Psoas muscle (tissue), 8 donors: ENCODE measurements at regions of chr17 and their contacts with region 1.

Region 1: GRCh38 chr17:4908301-4908700 is 5.4 kb upstream of the CHRNE start:
- DNase-seq: peak in 1 of 2 donors; percentile 61
- ATAC-seq: peak in 3 of 4 donors; percentile 2 to 13 (median 9)
- H3K4me3 ChIP-seq: no peak overlapping the region
- H3K27ac ChIP-seq: peak overlapping the region; percentile 75
- H3K4me1 ChIP-seq: peaks cover 3% of the 10 kb centered on the region
- H3K27me3 ChIP-seq: no peaks in the 10 kb centered on the region
- CTCF ChIP-seq: no peak

Region 2: DNA sequence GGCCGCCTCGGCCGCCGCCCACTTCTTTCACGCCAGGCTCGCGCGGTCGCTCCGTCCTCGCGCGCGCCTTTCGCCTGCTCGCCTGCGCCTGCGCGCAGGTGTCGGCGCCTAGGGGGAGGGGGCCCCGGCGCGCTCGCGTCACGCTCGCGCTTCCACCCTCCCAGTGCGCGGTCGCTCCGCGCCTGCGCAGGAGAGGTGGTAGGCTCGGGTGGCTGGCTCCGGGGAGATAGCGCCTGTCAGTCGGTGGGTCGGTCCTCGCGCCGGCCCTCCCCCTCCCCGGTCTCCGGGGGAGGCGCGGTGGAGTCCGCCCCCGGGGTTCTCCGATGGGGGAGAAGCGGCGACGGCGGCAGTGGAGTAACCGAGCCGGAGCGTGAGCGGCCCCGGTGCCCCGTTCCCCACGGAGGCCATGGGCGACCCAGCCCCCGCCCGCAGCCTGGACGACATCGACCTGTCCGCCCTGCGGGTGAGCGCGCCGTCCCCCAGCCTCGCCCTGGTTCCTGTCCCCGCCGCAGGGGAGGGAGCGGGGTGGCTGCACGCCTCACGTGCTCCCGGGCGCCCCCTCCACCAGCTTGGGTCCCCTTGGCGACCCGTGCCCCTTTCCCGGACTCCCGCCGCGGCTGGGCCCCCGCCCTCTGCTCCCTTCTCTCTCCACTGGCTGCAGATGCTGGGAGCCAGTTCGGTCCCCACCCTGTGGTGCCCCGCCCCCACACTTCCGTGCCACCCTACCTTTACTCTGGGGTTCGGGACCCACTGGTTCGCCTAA is 74.9 kb before region 1 on chr17 and contains the start of gene MINK1:
- intact Hi-C with region 1: no loop called
- DNase-seq: peak; percentile 91 to 95
- ATAC-seq: peak; percentile 98 to 99 (median 98)
- H3K4me3 ChIP-seq: peak within 1 kb of the TSS; percentile 98
- H3K27ac ChIP-seq: peak within 1 kb of the TSS; percentile 94
- H3K4me1 ChIP-seq: peaks cover 25% of the 10 kb centered on the region
- H3K27me3 ChIP-seq: no peaks in the 10 kb centered on the region
- CTCF ChIP-seq: no peak
- total RNA-seq, gene MINK1: 15.8 to 23.8 (median 20.8) TPM

Region 3: GRCh38 chr17:4881761-4882555 is 26.3 kb before region 1 on chr17:
- intact Hi-C with region 1: no loop called
- DNase-seq: peak; percentile 43 to 70
- ATAC-seq: peak; percentile 58 to 83 (median 70)
- H3K4me3 ChIP-seq: no peak overlapping the region
- H3K27ac ChIP-seq: no peak overlapping the region
- H3K4me1 ChIP-seq: no peaks in the 10 kb centered on the region
- H3K27me3 ChIP-seq: no peaks in the 10 kb centered on the region
- CTCF ChIP-seq: peak; percentile 67

Region 4: GRCh38 chr17:4934173-4934979 is 26.1 kb after region 1 on chr17:
- intact Hi-C with region 1: loop called in 1 of 2 experiments (anchors 2 kb)
- DNase-seq: peak in 1 of 2 donors; percentile 69
- ATAC-seq: peak; percentile 39 to 62 (median 48)
- H3K4me3 ChIP-seq: no peak overlapping the region
- H3K27ac ChIP-seq: peak overlapping the region; percentile 36
- H3K4me1 ChIP-seq: peaks cover 38% of the 10 kb centered on the region
- H3K27me3 ChIP-seq: no peaks in the 10 kb centered on the region
- CTCF ChIP-seq: peak; percentile 5

Region 5: GRCh38 chr17:4966844-4967538 is 58.7 kb after region 1 on chr17:
- intact Hi-C with region 1: no loop called
- DNase-seq: peak; percentile 97 to 99
- ATAC-seq: peak; percentile 86 to 89 (median 88)
- H3K4me3 ChIP-seq: peak overlapping the region; percentile 84
- H3K27ac ChIP-seq: peak overlapping the region; percentile 93
- H3K4me1 ChIP-seq: peaks cover 26% of the 10 kb centered on the region
- H3K27me3 ChIP-seq: no peaks in the 10 kb centered on the region
- CTCF ChIP-seq: no peak

Region 6: DNA sequence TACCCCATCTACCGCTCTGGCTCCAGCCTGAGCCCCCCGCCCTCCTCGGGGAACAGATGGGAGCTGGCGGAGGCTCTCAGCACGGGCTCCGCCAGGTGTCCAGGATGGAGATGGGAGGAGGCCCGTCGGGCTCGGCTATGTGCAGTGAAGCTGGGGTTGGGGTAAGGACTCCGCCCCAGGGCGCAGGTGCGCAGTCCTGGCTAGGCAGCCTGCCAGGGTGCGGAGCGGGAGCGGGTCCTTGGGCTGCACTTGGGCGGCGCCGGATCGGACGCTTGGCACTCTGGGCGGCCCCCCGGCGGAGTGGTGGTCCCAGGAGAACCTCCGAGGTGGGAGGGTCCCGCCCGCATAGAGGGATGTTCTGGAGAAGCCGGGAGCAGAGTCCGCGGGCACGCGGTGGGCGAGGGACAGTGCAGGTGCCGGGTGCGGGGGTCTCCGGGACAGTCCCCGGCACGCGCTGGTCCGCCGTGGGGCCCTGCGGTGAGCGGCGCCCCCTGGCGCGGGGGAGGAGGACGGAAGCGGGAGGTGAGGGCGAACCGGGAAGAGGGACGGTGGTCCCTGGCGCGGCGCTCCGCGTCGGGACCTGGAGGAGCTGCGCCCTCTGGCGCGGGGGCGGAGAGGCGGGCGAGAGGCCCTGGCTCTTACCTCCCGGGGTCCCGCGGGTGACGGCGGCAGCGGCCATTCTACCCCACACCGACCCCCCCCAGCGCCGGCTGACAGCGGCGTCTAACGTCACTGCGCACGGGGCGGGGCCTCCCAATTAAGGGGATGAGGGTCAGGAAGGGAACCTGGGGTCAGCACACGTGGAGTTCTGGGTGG is 78.9 kb after region 1 on chr17 and contains the start of gene CAMTA2:
- intact Hi-C with region 1: loop called (anchors 2 to 5 kb)
- DNase-seq: peak; percentile 93 to 97
- ATAC-seq: peak; percentile 92 to 96 (median 95)
- H3K4me3 ChIP-seq: peak within 1 kb of the TSS; percentile 94
- H3K27ac ChIP-seq: peak within 1 kb of the TSS; percentile 97
- H3K4me1 ChIP-seq: peaks cover 20% of the 10 kb centered on the region
- H3K27me3 ChIP-seq: no peaks in the 10 kb centered on the region
- CTCF ChIP-seq: peak; percentile 79
- total RNA-seq, gene CAMTA2: 43.0 to 60.8 (median 51.0) TPM

Region 7: DNA sequence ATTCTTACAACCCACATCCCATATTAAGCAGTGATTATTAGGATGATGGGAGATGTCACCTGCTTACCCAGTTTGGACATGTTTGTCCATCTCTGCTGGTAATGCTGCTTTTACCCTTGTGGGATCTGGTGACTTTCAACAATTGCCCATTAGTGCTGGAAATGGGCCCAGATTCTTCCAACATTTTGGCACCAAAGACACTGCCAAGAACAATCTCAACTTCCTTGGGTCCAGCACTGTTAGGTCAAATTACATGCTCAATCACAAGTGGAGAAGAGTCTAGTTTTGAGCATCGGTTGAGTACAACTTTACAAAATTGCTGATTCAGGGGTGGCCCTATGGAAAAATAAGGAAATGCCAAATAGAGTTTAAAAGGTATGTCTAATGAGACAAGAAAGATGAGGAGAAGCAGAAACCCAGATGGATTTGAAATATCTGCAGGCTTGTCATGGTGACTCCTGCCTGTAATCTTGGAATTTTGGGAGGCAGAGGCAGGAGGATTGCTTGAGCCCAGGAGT is 157.0 kb after region 1 on chr17:
- intact Hi-C with region 1: loop called (anchors 2 to 5 kb)
- DNase-seq: no peak
- ATAC-seq: no peak
- H3K4me3 ChIP-seq: no peak overlapping the region
- H3K27ac ChIP-seq: no peak overlapping the region
- H3K4me1 ChIP-seq: no peaks in the 10 kb centered on the region
- H3K27me3 ChIP-seq: no peaks in the 10 kb centered on the region
- CTCF ChIP-seq: no peak